Psoas muscle (tissue), 8 donors: ENCODE measurements at regions of chr4 and their contacts with region 1.

Region 1: DNA sequence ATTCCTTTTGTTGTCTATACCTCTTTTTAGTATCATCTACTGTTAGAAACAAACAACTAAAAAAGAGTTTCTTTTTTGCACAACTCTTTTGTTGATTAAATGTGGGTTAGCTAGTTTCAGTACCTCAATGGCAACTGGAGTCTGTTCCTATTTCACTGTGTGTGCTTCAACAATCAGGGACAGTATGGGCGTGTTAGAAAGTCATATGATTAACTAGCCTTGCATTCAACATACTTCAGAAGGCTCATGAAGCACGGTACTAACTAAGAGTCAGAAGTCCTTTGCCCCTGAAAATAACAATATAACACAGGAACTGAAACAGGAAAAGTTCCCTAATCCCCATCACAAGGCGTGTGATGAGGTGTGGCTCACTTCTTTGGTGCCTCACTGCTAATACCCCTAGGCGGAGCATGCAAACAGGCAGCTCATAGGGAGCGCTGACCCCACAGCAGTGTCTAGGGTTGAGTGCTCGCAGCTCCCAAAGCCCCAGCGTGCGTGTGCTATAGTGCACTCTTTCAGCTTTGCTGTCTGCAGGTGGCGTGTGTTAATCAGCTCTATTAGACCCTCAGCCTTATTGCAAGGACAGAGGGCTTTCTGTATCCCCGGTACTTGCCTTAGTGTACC is 203.1 kb upstream of the NDST3 start:
- DNase-seq: no peak
- ATAC-seq: no peak
- H3K4me3 ChIP-seq: no peak overlapping the region
- H3K27ac ChIP-seq: no peak overlapping the region
- H3K4me1 ChIP-seq: no peaks in the 10 kb centered on the region
- H3K27me3 ChIP-seq: no peaks in the 10 kb centered on the region
- CTCF ChIP-seq: no peak

Region 2: DNA sequence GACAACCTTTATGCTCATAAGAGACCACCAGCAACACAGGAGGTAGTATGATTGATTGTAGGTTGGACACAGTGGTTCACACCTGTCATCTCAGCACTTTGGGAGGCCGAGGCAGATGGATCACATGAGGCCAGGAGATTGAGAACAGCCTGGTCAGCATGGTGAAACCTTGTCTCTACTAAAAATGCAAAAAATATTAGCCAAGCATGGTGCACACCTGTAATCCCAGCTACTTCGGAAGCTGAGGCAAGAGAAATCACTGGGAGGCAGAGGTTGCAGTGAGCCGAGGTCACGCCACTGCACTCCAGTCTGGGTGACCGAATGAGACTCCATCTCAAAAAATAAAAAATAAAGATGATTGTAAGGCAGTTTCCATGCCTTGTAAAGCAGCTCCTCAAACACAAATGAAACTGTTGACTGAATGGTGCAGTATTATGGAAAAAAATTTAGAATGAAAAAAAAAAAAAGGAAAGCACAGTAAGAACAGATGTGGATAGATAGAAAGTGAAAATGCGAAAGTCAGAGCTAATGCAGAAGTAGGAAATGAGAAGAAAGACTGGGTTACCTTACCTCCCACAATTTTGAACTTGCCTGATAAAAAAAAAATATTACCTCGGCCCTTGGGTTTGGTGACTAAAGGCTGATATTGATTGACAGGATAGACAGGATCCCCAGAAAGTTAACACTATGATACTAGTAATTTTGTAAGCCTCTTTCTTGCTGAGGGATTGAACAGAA is 496.6 kb before region 1 on chr4:
- intact Hi-C with region 1: no loop called
- DNase-seq: no peak
- ATAC-seq: no peak
- H3K4me3 ChIP-seq: no peak overlapping the region
- H3K27ac ChIP-seq: no peak overlapping the region
- H3K4me1 ChIP-seq: no peaks in the 10 kb centered on the region
- H3K27me3 ChIP-seq: no peaks in the 10 kb centered on the region
- CTCF ChIP-seq: no peak

Region 3: GRCh38 chr4:117455088-117455487 is 376.1 kb before region 1 on chr4:
- intact Hi-C with region 1: no loop called
- DNase-seq: no peak
- ATAC-seq: no peak
- H3K4me3 ChIP-seq: no peak overlapping the region
- H3K27ac ChIP-seq: no peak overlapping the region
- H3K4me1 ChIP-seq: no peaks in the 10 kb centered on the region
- H3K27me3 ChIP-seq: no peaks in the 10 kb centered on the region
- CTCF ChIP-seq: no peak

Region 4: GRCh38 chr4:118206627-118207026 is 375.5 kb after region 1 on chr4:
- intact Hi-C with region 1: loop called in 1 of 2 experiments (anchors 5 kb)
- DNase-seq: no peak
- ATAC-seq: no peak
- H3K4me3 ChIP-seq: no peak overlapping the region
- H3K27ac ChIP-seq: no peak overlapping the region
- H3K4me1 ChIP-seq: no peaks in the 10 kb centered on the region
- H3K27me3 ChIP-seq: no peaks in the 10 kb centered on the region
- CTCF ChIP-seq: no peak